Aorta (tissue), 5 donors: ENCODE measurements at regions of chr6 and their contacts with region 1.

Region 1: GRCh38 chr6:121711472-121711871 is 276.0 kb downstream of the GJA1 start:
- DNase-seq: no peak
- ATAC-seq: no peak
- H3K4me3 ChIP-seq: no peak overlapping the region
- H3K27ac ChIP-seq: no peak overlapping the region
- H3K4me1 ChIP-seq: peaks cover 0 to 2% of the 10 kb centered on the region in 2 donors
- H3K27me3 ChIP-seq: no peaks in the 10 kb centered on the region

Region 2: GRCh38 chr6:121764493-121764892 is 53.0 kb after region 1 on chr6:
- intact Hi-C with region 1: loop called in 1 of 2 experiments (anchors 10 kb)
- DNase-seq: no peak
- ATAC-seq: no peak
- H3K4me3 ChIP-seq: no peak overlapping the region
- H3K27ac ChIP-seq: no peak overlapping the region
- H3K4me1 ChIP-seq: peaks cover 0 to 11% of the 10 kb centered on the region in 2 donors
- H3K27me3 ChIP-seq: no peaks in the 10 kb centered on the region